Posterior cingulate gyrus (tissue), 11 donors: ENCODE measurements at regions of chr9 and their contacts with region 1.

Region 1: DNA sequence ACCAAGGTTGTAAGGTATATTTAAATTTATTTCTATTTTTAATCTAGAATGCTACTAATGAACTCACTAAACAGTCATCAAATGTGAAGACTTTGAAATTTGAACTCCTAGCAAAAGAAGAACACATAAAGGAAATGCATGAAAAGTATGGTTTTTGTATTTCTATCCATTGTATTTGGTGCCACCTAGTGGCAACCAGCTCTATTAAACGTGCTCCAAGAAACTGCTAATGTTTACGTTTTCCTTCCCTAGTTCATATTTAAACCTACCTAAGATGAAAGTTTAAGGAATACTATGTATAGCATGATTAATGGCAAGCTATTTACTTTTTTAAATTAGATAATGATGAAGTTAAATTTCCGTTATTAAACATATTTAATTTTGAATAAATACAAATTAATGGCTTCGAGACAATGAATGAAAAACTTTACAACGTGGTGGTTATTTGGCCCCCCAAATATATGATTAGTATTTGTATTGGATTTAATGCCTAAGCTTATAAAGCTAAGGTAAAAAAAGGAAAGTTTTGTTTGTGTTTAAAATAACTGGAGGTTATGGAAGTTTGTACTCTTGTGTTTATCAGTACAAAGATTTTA is 115.9 kb upstream of the SH3GL2 start:
- DNase-seq: peak in 3 of 10 donors; percentile 8 to 19 (median 9)

Region 2: GRCh38 chr9:15873569-15874177 is 1589.3 kb before region 1 on chr9:
- intact Hi-C with region 1: loop called (anchors 5 kb)
- DNase-seq: no peak

Region 3: GRCh38 chr9:17063535-17064135 is 399.3 kb before region 1 on chr9:
- intact Hi-C with region 1: loop called (anchors 2 kb)
- DNase-seq: no peak

Region 4: GRCh38 chr9:17116400-17116837 is 346.5 kb before region 1 on chr9:
- intact Hi-C with region 1: loop called (anchors 2 kb)
- DNase-seq: no peak